GM10248 (cell line): ENCODE measurements at regions of chr18 and their contacts with region 1.

Region 1: GRCh38 chr18:69958422-69958821 is 10.7 kb upstream of the CD226 start:
- DNase-seq: peak; percentile 55
- CTCF ChIP-seq: no peak

Region 2: GRCh38 chr18:69947361-69948133 is 10.9 kb before region 1 on chr18 and contains the start of gene CD226:
- CTCF ChIA-PET with region 1: interaction called, 23 read pairs
- POLR2A ChIA-PET with region 1: interaction called, 8 read pairs
- DNase-seq: no peak
- CTCF ChIP-seq: no peak

Region 3: GRCh38 chr18:69978732-69979715 is 20.6 kb after region 1 on chr18:
- CTCF ChIA-PET with region 1: interaction called, 12 read pairs
- POLR2A ChIA-PET with region 1: interaction called, 3 read pairs
- DNase-seq: peak; percentile 36
- CTCF ChIP-seq: no peak

Region 4: GRCh38 chr18:70221156-70221914 is 262.9 kb after region 1 on chr18:
- CTCF ChIA-PET with region 1: no interaction called
- POLR2A ChIA-PET with region 1: no interaction called
- DNase-seq: no peak
- CTCF ChIP-seq: no peak